GM23248 (cell line): ENCODE measurements at regions of chr3 and their contacts with region 1.

Region 1: GRCh38 chr3:59212128-59212779 is 162.4 kb upstream of the CFAP20DC start:
- DNase-seq: peak; percentile 72
- H3K4me3 ChIP-seq: no peak overlapping the region
- H3K27ac ChIP-seq: no peak overlapping the region
- H3K4me1 ChIP-seq: peaks cover 4% of the 10 kb centered on the region
- H3K27me3 ChIP-seq: no peaks in the 10 kb centered on the region

Region 2: GRCh38 chr3:58994746-58995330 is 217.4 kb before region 1 on chr3:
- in situ Hi-C with region 1: loop called (anchors 5 kb)
- DNase-seq: peak; percentile 83
- H3K4me3 ChIP-seq: peak overlapping the region; percentile 35; the same call in 1 of the 2 replicates
- H3K27ac ChIP-seq: no peak overlapping the region
- H3K4me1 ChIP-seq: peaks cover 43% of the 10 kb centered on the region
- H3K27me3 ChIP-seq: no peaks in the 10 kb centered on the region

Region 3: GRCh38 chr3:59436164-59436958 is 224.1 kb after region 1 on chr3:
- in situ Hi-C with region 1: no loop called
- DNase-seq: no peak
- H3K4me3 ChIP-seq: no peak overlapping the region
- H3K27ac ChIP-seq: no peak overlapping the region
- H3K4me1 ChIP-seq: no peaks in the 10 kb centered on the region
- H3K27me3 ChIP-seq: no peaks in the 10 kb centered on the region

Region 4: GRCh38 chr3:59575113-59576001 is 363.1 kb after region 1 on chr3:
- in situ Hi-C with region 1: loop called (anchors 25 kb)
- DNase-seq: peak; percentile 76
- H3K4me3 ChIP-seq: no peak overlapping the region
- H3K27ac ChIP-seq: no peak overlapping the region
- H3K4me1 ChIP-seq: peaks cover 20% of the 10 kb centered on the region
- H3K27me3 ChIP-seq: no peaks in the 10 kb centered on the region